K562 (cell line): ENCODE measurements at regions of chr2 and their contacts with region 1.

Region 1: DNA sequence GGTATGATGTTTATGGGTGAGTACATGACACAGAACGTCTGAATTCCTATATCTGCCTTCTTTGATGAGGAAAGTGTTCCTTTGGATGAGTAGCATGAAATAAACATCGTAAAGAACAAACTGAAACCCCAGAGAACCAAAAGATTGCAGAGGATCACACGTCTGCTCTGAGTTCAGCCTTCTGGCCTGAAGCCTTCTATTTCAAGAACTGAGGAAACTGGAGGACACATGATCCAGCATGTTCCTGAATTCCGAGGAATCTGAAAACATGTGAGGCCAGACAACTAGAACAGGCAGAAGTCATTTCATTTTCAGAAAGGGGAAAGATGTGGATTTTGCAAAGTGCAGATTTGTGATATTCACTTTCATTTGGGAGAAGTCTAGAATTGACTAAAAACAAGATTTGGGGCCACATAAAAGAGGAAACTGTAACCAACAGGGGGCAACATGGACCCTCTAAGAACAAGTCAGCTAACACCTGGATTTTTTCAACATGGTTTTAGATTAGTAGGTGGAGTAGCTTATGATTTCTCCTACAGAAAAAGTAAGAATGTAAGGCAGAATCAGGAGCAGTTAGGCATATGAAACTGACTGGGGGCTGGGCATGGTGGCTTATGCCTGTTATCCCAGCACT is 8.3 kb downstream of the SULT6B1 start:
- DNase-seq: no peak
- ATAC-seq: peak; percentile 56; the same call in 2 of the 3 replicates
- H3K4me3 ChIP-seq: no peak overlapping the region
- H3K27ac ChIP-seq: no peak overlapping the region
- H3K4me1 ChIP-seq: peaks cover 5 to 11% of the 10 kb centered on the region in 2 experiments; a peak in 3 of 5 replicates
- H3K27me3 ChIP-seq: peaks cover 4 to 5% of the 10 kb centered on the region in 2 experiments; a peak in 4 of 5 replicates
- CTCF ChIP-seq: peak in 1 of 3 experiments; percentile 17; a peak in 1 of 6 replicates
- EP300 ChIP-seq: no peak
- POLR2A ChIP-seq: no peak
- RAD21 ChIP-seq: no peak

Region 2: DNA sequence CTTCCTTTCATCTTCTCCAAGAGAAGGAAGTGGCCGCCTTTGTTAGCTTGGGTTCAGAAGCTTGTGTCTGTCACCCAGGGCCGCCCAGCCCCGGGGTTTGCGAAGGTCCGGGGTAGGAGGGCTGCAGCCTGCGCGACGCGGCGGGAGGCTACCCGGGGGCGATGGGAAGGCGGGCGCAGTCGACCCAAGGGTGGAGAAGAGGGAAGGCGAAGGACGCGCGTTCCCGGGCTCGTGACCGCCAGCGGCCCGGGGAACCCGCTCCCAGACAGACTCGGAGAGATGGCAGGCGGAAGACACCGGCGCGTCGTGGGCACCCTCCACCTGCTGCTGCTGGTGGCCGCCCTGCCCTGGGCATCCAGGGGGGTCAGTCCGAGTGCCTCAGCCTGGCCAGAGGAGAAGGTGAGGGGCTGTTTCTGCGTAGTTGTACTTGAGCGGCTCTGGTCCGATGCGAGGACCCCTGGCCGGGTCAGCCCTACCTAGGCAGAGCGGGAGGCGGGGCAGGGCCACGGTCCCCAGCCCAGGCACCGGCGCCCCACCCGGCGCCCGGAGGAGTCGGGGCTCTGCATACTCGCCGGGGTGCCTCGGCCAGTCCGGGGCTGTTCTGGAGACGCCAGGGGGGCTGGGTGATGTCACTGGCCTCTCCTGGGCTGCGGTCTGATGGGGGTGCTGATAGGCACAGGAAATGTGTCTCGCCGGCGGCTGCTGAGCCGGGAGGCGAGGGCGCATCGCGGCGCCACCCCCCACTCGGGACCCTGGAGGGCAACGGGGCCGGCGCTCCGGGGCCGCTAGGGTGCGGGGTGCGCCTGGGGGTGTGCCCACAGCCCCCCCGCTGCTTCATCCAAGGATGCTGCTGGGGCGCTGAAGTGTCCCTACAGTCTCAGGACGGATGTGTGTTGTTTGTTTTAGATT is 164.6 kb after region 1 on chr2 and contains the start of gene QPCT:
- CTCF ChIA-PET with region 1: no interaction called
- POLR2A ChIA-PET with region 1: no interaction called
- in situ Hi-C with region 1: no loop called
- intact Hi-C with region 1: no loop called
- DNase-seq: peak; percentile 13 to 29 (median 16)
- ATAC-seq: peak; percentile 67
- H3K4me3 ChIP-seq: no peak within 1 kb of the TSS
- H3K27ac ChIP-seq: no peak within 1 kb of the TSS
- H3K4me1 ChIP-seq: peaks cover 0 to 10% of the 10 kb centered on the region in 2 experiments; a peak in 2 of 5 replicates
- H3K27me3 ChIP-seq: peaks cover 5 to 25% of the 10 kb centered on the region in 2 experiments
- CTCF ChIP-seq: no peak
- EP300 ChIP-seq: no peak
- POLR2A ChIP-seq: no peak
- RAD21 ChIP-seq: no peak
- polyA plus RNA-seq, gene QPCT: not detected

Region 3: DNA sequence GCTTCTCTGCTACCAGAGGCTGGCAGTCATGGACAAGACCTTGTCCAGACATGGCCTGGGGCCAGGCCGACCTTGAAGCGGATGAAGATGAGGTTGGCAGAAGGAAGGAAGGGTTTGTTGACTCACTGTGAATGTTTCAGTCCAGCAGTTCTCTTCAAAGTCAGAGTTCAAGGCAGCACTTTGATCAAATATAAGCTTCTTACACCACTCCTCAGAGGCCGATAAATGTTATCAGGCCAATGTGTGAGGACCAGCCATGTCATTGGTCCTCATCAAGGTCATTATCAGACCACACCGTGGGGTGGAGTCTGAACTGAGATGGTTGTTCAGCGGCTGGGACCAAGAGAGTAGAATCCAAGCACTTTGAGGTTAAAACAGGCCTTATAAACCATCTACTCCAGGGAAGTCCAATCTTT is 199.8 kb after region 1 on chr2:
- CTCF ChIA-PET with region 1: no interaction called
- POLR2A ChIA-PET with region 1: no interaction called
- in situ Hi-C with region 1: no loop called
- intact Hi-C with region 1: loop called (anchors 5 kb)
- DNase-seq: peak in 1 of 4 experiments; percentile 8
- ATAC-seq: no peak
- H3K4me3 ChIP-seq: no peak overlapping the region
- H3K27ac ChIP-seq: no peak overlapping the region
- H3K4me1 ChIP-seq: no peaks in the 10 kb centered on the region
- H3K27me3 ChIP-seq: peaks cover 4 to 19% of the 10 kb centered on the region in 2 experiments; a peak in 3 of 5 replicates
- CTCF ChIP-seq: no peak
- EP300 ChIP-seq: no peak
- POLR2A ChIP-seq: no peak
- RAD21 ChIP-seq: no peak

Region 4: DNA sequence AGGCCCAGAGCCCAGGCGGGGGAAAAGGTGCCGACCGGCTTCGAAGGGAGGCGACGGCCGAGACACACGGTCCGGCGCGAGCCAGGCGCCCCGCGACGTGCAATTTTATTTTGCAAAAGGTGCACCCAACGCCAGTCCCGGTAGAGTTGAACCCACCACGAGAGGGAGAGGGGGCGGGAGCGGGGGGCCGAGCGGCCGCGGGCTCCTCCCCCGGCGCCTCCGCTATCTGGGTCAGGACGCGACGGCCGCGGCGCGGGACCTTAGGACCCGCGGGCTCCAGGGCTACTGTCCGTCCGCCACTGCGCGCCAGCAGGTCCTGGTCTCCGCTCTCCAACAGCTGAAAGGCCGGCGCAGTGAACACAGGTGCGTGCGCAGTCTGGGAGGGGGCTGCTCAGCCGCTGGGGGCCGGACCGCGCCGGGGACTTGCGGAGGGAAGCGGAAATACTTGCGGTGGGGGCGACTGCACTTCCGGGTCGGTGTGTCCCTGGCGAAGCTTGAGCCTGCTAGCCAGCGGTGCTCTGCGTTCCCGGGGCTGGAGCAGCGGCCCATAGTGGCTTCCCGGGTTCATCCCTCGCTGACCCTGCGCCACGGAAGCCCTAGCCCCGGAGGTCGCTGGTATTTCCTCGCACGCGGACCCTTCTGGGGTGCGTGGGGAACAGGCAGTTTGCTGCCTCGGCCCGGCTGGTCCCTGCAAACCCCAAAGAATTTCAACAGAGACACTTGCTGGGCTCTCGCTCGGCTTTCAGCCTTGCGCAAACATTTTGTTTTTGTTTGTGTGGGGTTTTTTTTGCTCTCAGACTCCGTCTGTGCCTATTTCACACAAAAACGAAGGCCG is 745.2 kb after region 1 on chr2 and contains the start of gene RMDN2:
- CTCF ChIA-PET with region 1: no interaction called
- POLR2A ChIA-PET with region 1: no interaction called
- in situ Hi-C with region 1: no loop called
- intact Hi-C with region 1: no loop called
- DNase-seq: peak; percentile 84 to 91 (median 88)
- ATAC-seq: peak; percentile 98
- H3K4me3 ChIP-seq: peak within 1 kb of the TSS; percentile 59
- H3K27ac ChIP-seq: peak within 1 kb of the TSS; percentile 71
- H3K4me1 ChIP-seq: peaks cover 0 to 14% of the 10 kb centered on the region in 2 experiments; a peak in 1 of 5 replicates
- H3K27me3 ChIP-seq: no peaks in the 10 kb centered on the region; a peak in 1 of 5 replicates
- CTCF ChIP-seq: no peak
- EP300 ChIP-seq: no peak; the same call in 1 of the 2 replicates
- POLR2A ChIP-seq: peak; percentile 89
- RAD21 ChIP-seq: 0 out of 4 replicates have a peak, but pooled peaks of 1 of the 2 experiments have one; percentile 8
- polyA plus RNA-seq, gene RMDN2: 1.8 to 3.7 TPM